ENCODE measurements at regions of chr22 and their contacts with region 1.

Region 1: GRCh38 chr22:20783844-20784723 is 10.2 kb downstream of the SERPIND1 start:
- DNase-seq: peak; percentile 79
- CTCF ChIP-seq: peak; percentile 75

Region 2: DNA sequence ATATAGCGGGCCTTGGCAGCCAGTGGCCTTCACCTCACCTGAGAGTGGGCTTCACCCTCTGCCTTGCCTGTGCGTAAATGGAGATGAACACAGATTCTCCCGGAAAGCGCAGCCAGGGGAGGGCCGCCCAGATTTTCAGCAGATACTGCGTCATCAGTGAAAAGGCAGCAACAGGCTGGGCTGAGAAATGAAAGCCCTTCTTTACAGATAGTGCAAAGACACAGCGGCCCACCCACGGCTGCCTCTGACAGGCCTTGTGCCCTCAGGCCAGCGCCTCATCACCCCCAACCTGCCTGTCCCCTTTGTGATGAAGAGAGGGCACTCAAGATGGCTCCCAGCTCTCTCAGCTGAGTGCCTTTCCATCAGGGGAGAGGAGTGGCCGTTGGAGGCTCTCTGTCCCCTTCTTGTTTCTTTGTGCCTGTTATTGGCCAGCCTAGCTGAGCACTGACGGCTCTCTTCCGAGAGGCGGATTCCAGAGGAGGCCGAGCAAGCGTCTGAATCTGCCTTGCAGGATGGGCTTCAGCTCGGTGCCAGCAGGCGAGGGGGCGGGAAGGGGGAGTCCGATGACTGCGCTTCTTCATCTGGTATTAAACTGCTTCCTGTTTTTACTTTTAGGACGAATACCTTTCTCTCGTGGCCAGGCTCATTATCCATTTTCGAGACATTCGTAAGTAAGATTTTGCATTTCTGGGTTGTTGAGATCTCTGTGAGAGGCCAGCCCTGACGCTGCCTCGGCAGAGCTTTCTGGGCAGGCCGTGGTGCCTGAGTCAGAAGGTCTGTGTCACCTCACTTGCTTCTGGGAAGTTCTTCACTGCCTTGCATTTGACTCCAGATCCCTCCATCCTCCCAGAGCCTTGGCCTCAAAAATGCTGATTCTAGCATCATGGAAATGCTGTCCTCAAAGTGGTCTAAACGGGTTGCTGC is 233.0 kb before region 1 on chr22:
- CTCF ChIA-PET with region 1: no interaction called
- POLR2A ChIA-PET with region 1: no interaction called
- DNase-seq: peak; percentile 58
- CTCF ChIP-seq: no peak

Region 3: GRCh38 chr22:20671409-20672081 is 112.5 kb before region 1 on chr22:
- CTCF ChIA-PET with region 1: no interaction called
- POLR2A ChIA-PET with region 1: no interaction called
- DNase-seq: no peak
- CTCF ChIP-seq: no peak

Region 4: GRCh38 chr22:20750461-20751184 is 33.5 kb before region 1 on chr22:
- CTCF ChIA-PET with region 1: interaction called, 16 read pairs
- POLR2A ChIA-PET with region 1: no interaction called
- DNase-seq: peak; percentile 79
- CTCF ChIP-seq: no peak

Region 5: GRCh38 chr22:20771918-20772625 is 12.0 kb before region 1 on chr22:
- CTCF ChIA-PET with region 1: interaction called, 42 read pairs
- POLR2A ChIA-PET with region 1: no interaction called
- DNase-seq: no peak
- CTCF ChIP-seq: no peak

Region 6: GRCh38 chr22:20803696-20804324 is 19.7 kb after region 1 on chr22:
- CTCF ChIA-PET with region 1: interaction called, 26 read pairs
- POLR2A ChIA-PET with region 1: no interaction called
- DNase-seq: peak; percentile 38
- CTCF ChIP-seq: peak; percentile 49

Measured in GM10248 (cell line).